GM18951 (cell line): ENCODE measurements at regions of chr2 and their contacts with region 1.

Region 1: DNA sequence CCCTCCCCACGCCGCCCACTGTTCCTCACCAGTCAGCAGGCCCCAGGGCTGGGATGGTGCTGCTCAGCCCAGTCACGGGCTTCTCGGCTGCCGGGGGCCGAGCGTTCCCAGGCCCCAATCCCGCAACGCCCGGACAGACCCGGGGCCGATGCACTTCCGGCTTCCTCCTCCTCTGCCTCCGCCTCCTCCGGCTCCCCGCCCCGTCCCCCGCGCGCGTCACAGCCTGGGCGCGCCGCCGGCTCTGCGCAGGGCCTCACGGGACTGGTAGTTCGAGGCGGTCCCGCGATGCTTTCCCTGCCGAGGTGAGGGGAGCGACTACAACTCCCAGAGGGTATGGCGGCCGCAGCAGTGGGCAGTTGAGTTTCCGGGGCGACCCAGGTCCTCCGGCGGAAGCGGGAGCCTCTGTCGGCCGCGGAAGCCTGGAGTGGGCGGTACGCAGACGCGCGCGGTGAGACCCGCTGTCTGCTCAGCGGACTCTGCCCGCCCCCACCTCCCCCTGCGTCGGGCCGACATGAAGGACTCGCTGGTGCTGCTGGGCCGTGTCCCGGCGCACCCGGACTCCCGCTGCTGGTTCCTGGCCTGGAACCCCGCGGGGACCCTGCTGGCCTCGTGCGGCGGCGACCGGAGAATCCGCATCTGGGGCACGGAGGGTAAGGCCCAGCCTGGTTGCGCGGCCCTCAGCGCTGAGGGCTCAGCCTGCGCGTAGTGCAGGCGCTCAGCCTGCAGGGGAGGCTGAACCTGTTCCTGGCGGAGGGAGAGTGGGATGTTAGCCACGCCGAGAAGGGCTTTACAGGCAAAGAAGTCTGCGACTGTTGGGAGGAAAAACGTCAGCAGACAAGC is at the starts of genes CIAO1 and TMEM127:
- POLR2A ChIP-seq: peak; percentile 77

Region 2: GRCh38 chr2:96024336-96025193 is 241.5 kb before region 1 on chr2:
- in situ Hi-C with region 1: loop called (anchors 25 kb)
- POLR2A ChIP-seq: no peak